SK-N-SH (cell line): ENCODE measurements at regions of chr17 and their contacts with region 1.

Region 1: DNA sequence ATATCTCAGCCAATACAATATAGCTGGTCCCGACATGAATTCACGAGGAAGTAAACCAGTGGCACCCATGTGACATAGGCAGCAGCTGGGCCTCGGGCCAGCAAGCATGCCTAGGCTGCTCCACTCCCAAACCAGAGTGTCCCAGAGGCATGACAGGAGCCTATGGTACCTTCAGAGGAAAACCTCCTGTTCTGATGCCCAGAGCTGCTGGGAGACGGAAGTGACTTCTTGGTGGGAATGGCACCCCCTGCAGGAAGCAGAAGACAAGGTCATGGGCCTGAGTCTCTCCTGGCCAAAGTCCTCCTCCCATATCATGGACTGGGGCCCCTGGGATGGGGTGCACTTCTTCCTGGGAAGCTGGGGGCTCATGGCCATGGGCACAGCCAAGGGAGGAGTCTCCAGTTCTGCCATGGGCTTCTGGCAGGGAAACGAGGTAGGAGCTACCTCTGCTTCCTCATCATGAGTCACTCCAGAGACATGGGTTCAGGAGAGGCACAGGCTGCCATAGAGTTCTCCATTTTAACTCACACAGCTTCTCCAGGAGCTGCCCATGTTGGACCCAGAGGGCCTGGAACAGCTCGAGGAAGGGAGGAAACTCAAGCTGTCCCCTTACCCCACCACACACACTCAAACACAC is 13.4 kb downstream of the FBF1 start:
- DNase-seq: peak; percentile 75
- H3K4me3 ChIP-seq: no peak overlapping the region
- H3K27ac ChIP-seq: no peak overlapping the region
- H3K4me1 ChIP-seq: no peaks in the 10 kb centered on the region
- H3K27me3 ChIP-seq: no peaks in the 10 kb centered on the region
- CTCF ChIP-seq: peak; percentile 46
- EP300 ChIP-seq: no peak
- RAD21 ChIP-seq: peak; percentile 29; the same call in 1 of the 2 replicates

Region 2: DNA sequence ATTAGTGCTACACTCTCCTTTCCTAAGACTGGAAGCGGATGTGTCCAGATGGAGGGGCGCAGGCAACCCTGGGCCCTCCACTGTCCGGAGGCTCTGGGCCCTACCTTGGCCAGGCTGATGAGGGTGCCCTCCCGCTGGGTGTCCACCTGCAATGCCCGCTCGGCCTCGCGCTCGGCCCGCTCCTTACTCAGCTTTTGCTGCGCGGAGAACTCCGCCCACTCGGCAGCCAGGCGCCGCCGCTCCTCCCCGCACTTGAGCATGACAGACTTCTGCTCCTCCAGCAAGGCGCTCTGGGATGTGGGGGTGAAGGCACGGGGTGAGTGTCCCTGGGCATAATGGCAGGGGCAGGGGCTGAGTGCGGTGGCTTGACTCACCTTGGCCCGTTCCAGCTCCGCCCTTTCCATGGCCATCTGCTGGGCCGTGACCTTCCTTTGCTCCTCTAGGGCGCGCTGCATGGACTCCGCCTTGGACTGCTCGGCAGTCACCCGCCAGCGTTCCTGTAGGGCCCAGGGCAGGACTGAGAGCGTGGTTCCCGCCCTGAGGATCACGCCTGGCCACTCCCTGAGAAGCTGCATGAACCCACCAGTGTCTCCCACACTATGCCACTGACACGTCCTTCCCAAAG is 12.6 kb before region 1 on chr17:
- CTCF ChIA-PET with region 1: interaction called, 17 read pairs
- POLR2A ChIA-PET with region 1: interaction called, 5 read pairs
- DNase-seq: no peak
- H3K4me3 ChIP-seq: no peak overlapping the region
- H3K27ac ChIP-seq: no peak overlapping the region
- H3K4me1 ChIP-seq: peaks cover 0 to 10% of the 10 kb centered on the region in 2 experiments; a peak in 1 of 4 replicates
- H3K27me3 ChIP-seq: no peaks in the 10 kb centered on the region
- CTCF ChIP-seq: no peak
- EP300 ChIP-seq: no peak
- RAD21 ChIP-seq: no peak